Vagina (tissue), 2 donors: ENCODE measurements at regions of chr6 and their contacts with region 1.

Region 1: DNA sequence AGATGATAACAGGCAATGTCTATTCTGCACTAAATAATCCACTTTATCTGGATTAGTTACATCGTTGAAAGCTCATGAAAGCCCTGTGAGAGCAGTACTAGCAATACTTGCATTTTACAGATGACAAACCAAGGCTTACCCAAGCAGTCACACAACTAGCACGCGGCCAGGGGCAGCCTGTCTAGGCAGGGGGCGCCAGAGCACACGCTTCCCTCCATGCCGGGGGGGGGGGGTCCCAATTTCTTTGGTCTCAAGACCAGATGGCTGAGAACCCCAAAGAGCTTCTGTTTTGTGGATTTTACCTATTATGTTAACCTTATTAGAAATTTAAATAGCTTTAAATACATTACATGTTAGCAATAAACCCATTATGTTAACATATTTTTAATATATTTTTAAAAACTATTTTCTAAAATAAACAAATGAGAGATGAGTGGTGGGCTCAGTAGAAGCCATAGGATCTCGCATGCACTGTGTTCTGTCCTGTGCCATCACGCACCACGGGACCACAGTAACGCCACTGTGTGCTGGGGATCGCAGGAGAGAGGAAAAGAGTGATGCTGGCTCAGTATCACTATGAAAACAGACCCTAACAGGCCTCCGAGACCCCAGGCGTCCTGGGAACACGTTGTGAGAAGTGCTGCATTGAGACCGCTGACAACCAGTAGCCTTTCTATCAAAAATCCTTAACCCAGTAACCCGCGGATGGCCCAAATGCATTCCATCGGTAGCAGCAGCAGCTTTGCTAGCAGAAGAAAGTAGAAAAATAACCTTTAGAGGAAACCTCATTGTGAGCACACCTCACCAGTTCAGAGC is 5.3 kb upstream of the PRR18 start:
- DNase-seq: no peak
- H3K4me3 ChIP-seq: no peak overlapping the region
- H3K27ac ChIP-seq: no peak overlapping the region
- H3K4me1 ChIP-seq: peaks cover 3% of the 10 kb centered on the region
- H3K27me3 ChIP-seq: no peaks in the 10 kb centered on the region
- CTCF ChIP-seq: peak; percentile 25 to 46 (median 31)
- POLR2A ChIP-seq: no peak

Region 2: DNA sequence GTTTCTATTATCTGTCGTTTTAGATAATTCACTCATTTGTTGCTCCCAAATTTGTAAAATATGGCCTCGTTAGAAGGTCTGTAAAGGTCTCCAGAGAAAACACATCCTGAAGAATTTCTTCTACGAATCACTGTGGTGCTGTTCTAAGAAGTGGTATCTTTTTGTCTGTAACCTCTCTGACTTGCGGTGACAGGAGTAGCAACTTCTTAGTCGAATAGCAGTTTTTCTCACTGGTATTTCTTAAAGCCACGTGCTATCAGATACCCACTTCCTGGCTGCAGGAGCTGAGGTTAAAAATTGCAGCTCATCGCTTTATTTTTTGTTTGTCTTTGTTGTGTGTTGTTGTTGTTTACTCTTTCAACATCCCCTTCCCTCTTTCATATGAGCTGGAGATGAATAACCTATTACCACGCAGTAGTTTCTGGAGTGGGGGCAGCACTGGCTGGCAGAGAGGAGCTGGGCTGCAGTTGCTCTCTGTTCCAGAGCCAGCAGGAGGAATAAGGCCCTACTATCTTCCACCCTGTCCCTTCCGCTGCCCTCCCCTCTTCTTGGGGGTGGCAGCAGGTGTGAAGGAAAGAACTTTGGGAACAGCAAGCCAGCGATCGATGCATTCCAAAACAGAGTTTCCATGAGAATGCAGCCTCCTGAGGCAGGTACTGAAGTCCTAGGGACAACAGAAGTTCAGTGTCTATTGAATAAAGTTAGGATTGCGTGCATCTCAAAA is 1068.8 kb before region 1 on chr6:
- intact Hi-C with region 1: loop called (anchors 5 kb)
- DNase-seq: no peak
- H3K4me3 ChIP-seq: no peak overlapping the region
- H3K27ac ChIP-seq: no peak overlapping the region
- H3K4me1 ChIP-seq: no peaks in the 10 kb centered on the region
- H3K27me3 ChIP-seq: no peaks in the 10 kb centered on the region
- CTCF ChIP-seq: no peak
- POLR2A ChIP-seq: no peak

Region 3: GRCh38 chr6:166394036-166394892 is 80.8 kb after region 1 on chr6:
- intact Hi-C with region 1: loop called (anchors 10 kb)
- DNase-seq: no peak
- H3K4me3 ChIP-seq: no peak overlapping the region
- H3K27ac ChIP-seq: no peak overlapping the region
- H3K4me1 ChIP-seq: no peaks in the 10 kb centered on the region
- H3K27me3 ChIP-seq: no peaks in the 10 kb centered on the region
- CTCF ChIP-seq: no peak
- POLR2A ChIP-seq: no peak